Left ventricle myocardium inferior (tissue), 1 donor: ENCODE measurements at regions of chr2 and their contacts with region 1.

Region 1: GRCh38 chr2:126699716-126700581 is 44.0 kb downstream of the GYPC start:
- DNase-seq: no peak
- H3K4me3 ChIP-seq: no peak overlapping the region
- H3K27ac ChIP-seq: peak overlapping the region; percentile 66
- H3K4me1 ChIP-seq: peaks cover 75% of the 10 kb centered on the region
- H3K27me3 ChIP-seq: no peaks in the 10 kb centered on the region
- CTCF ChIP-seq: no peak

Region 2: DNA sequence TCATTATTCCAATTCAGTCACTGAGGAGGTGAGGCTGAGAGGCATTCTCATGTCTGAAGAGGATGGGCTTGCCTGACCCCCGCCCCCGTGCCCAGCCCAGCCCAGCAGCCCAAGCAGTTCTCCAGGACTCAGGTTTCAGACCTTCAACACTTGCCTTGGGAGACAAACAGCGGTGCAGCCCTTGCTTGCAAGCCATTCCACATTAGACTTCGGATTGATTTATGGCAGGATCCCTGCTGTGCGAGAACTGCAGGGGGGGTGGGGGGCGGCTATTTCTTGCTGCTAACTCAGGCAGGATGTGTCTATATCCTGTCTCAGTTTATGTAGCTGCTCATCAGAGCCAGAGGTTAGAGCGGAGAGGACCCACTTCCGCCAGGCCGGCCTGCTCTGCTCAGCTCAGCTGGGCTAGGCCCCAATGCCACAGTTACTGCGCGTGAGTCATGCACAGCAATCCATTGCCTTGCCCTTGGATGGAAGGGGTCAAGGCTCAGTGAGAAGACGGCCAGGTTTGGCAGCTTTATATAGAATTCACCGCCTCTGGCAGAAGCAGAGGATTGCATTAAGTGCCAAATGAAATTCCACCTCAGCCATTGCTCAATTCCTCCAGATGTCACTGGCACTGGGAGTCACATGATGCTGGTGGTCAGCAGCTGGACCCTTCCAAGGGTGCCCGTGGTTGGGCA is 42.2 kb before region 1 on chr2:
- intact Hi-C with region 1: loop called (anchors 5 kb)
- DNase-seq: peak; percentile 77
- H3K4me3 ChIP-seq: peak overlapping the region; percentile 77
- H3K27ac ChIP-seq: peak overlapping the region; percentile 98
- H3K4me1 ChIP-seq: peaks cover 83% of the 10 kb centered on the region
- H3K27me3 ChIP-seq: no peaks in the 10 kb centered on the region
- CTCF ChIP-seq: no peak